CD4-positive, alpha-beta T cell (primary cell): ENCODE measurements at regions of chr10 and their contacts with region 1.

Region 1: DNA sequence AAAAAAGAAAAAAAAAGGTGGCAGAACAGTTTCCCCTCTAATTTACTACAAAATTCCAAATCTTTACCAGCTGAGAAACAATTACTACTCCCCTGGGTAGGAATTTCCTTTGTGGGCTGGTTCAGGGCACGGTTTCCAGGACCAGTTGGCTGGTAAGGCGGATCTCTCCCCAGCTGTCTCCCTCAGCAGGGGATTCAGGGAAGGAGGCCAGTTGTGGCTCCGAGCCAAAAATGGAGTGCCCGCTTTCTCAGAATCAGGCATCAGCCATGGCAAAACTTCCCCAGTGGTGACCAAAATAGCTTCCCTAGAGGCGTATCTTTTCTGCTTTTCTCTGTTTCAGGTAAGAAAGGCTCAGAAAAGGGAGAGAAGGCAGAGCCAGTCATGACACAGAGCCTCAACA is 91.2 kb downstream of the ZNF22 start:
- DNase-seq: no peak
- ATAC-seq: no peak
- H3K4me3 ChIP-seq: no peak overlapping the region
- H3K4me3 Mint-ChIP-seq: no peak overlapping the region
- H3K27ac ChIP-seq: no peak overlapping the region
- H3K27ac Mint-ChIP-seq: no peak overlapping the region
- H3K4me1 ChIP-seq: no peaks in the 10 kb centered on the region
- H3K4me1 Mint-ChIP-seq: no peaks in the 10 kb centered on the region
- H3K27me3 ChIP-seq: peaks cover 14 to 18% of the 10 kb centered on the region in 2 experiments
- H3K27me3 Mint-ChIP-seq: peaks cover 55% of the 10 kb centered on the region
- CTCF ChIP-seq: no peak

Region 2: GRCh38 chr10:45063591-45064231 is 28.3 kb before region 1 on chr10:
- CTCF ChIA-PET with region 1: no interaction called
- POLR2A ChIA-PET with region 1: no interaction called
- intact Hi-C with region 1: no loop called
- DNase-seq: no peak
- ATAC-seq: no peak
- H3K4me3 ChIP-seq: no peak overlapping the region
- H3K4me3 Mint-ChIP-seq: no peak overlapping the region
- H3K27ac ChIP-seq: no peak overlapping the region
- H3K27ac Mint-ChIP-seq: no peak overlapping the region
- H3K4me1 ChIP-seq: no peaks in the 10 kb centered on the region
- H3K4me1 Mint-ChIP-seq: no peaks in the 10 kb centered on the region
- H3K27me3 ChIP-seq: no peaks in the 10 kb centered on the region
- H3K27me3 Mint-ChIP-seq: peaks cover 10% of the 10 kb centered on the region
- CTCF ChIP-seq: no peak

Region 3: GRCh38 chr10:45106236-45106856 is 14.4 kb after region 1 on chr10:
- CTCF ChIA-PET with region 1: no interaction called
- POLR2A ChIA-PET with region 1: no interaction called
- intact Hi-C with region 1: loop called in 1 of 2 experiments (anchors 1 kb)
- DNase-seq: no peak
- ATAC-seq: no peak
- H3K4me3 ChIP-seq: no peak overlapping the region
- H3K4me3 Mint-ChIP-seq: no peak overlapping the region
- H3K27ac ChIP-seq: no peak overlapping the region
- H3K27ac Mint-ChIP-seq: no peak overlapping the region
- H3K4me1 ChIP-seq: no peaks in the 10 kb centered on the region
- H3K4me1 Mint-ChIP-seq: no peaks in the 10 kb centered on the region
- H3K27me3 ChIP-seq: peaks cover 0 to 5% of the 10 kb centered on the region in 2 experiments
- H3K27me3 Mint-ChIP-seq: peaks cover 53% of the 10 kb centered on the region
- CTCF ChIP-seq: no peak